ENCODE measurements at regions of chr15 and their contacts with region 1.

Region 1: GRCh38 chr15:90320061-90320884 is 31.8 kb upstream of the ZNF774 start:
- DNase-seq: peak; percentile 80
- ATAC-seq: peak; percentile 96
- H3K4me3 Mint-ChIP-seq: peak overlapping the region; percentile 68
- H3K27ac Mint-ChIP-seq: peak overlapping the region; percentile 95
- H3K4me1 Mint-ChIP-seq: peaks cover 13% of the 10 kb centered on the region
- H3K27me3 Mint-ChIP-seq: no peaks in the 10 kb centered on the region
- CTCF ChIP-seq: peak; percentile 89

Region 2: GRCh38 chr15:90233376-90234095 is 86.7 kb before region 1 on chr15 and contains the start of gene CIB1:
- CTCF ChIA-PET with region 1: interaction called, 13 read pairs
- POLR2A ChIA-PET with region 1: no interaction called
- DNase-seq: peak; percentile 95
- ATAC-seq: peak; percentile 90
- H3K4me3 Mint-ChIP-seq: peak within 1 kb of the TSS; percentile 72
- H3K27ac Mint-ChIP-seq: peak within 1 kb of the TSS; percentile 25
- H3K4me1 Mint-ChIP-seq: peaks cover 16% of the 10 kb centered on the region
- H3K27me3 Mint-ChIP-seq: no peaks in the 10 kb centered on the region
- CTCF ChIP-seq: no peak
- total RNA-seq, gene CIB1: 26.1 to 29.6 TPM (median 26.9 TPM) in 3 replicates

Region 3: DNA sequence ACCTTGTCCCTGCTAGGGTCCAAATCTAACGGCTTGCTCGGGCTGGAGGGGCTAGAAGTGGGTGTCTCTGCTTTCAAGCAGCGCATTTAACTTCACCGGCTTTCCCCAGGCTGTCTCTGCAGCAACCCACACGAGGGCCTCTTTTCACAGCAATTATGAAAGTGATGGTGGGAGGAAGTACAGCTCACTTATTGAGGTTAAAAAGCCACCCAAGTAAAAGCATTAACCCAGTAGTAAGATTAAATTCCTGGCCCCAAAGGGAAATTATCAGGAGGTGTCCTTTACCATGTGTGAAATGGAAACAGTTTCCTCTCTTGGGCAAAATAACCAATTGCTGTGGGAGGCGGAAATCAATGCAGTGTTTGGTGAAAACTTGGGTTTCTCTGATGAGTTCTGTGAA is 13.7 kb before region 1 on chr15:
- CTCF ChIA-PET with region 1: interaction called, 28 read pairs
- POLR2A ChIA-PET with region 1: no interaction called
- DNase-seq: no peak
- ATAC-seq: no peak
- H3K4me3 Mint-ChIP-seq: no peak overlapping the region
- H3K27ac Mint-ChIP-seq: no peak overlapping the region
- H3K4me1 Mint-ChIP-seq: peaks cover 6% of the 10 kb centered on the region
- H3K27me3 Mint-ChIP-seq: no peaks in the 10 kb centered on the region; the same call in 1 of the 2 replicates
- CTCF ChIP-seq: no peak

Region 4: DNA sequence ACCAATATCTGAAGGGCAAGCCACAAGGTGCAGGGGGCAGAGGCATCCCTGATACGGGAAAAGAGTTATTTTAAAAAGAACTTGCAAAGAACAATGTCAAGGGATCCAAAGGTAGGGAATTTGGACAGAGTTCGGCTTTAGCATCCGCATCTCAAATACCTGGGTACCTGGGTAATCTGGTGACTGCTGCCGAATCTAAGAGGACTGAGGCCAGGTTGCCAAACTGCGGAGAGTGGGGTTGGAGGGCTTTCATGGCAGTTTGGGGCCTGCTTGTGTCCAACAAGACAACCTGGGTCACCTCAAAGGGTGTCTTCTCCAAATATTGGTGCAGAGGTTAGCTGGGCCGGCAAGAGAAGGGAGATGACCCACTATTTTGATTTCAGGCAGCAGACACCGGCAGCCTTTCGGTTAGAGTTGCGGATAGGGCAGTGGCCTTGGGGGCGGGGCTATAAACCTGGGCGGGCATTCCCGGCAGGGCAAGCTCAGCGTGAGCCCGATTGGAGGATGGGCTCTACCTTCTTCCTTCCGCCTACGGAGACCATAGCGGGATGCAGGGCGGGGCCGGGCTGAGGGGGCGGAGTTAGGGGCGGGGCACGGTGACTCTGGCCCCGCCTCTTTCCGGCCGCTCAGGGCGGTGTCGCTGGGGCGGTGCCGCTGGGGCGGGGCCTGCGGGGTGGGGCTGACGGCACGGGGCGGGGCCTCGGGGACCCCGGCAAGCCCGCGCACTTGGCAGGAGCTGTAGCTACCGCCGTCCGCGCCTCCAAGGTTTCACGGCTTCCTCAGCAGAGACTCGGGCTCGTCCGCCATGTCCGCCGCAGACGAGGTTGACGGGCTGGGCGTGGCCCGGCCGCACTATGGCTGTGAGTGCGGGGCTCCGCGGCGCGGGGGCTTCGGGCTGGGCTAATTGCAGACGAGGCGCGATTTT is 67.5 kb after region 1 on chr15 and contains the start of gene IQGAP1:
- CTCF ChIA-PET with region 1: interaction called, 27 read pairs
- POLR2A ChIA-PET with region 1: no interaction called
- DNase-seq: peak; percentile 99
- ATAC-seq: peak; percentile 94
- H3K4me3 Mint-ChIP-seq: peak within 1 kb of the TSS; percentile 83
- H3K27ac Mint-ChIP-seq: peak within 1 kb of the TSS; percentile 89
- H3K4me1 Mint-ChIP-seq: peaks cover 39% of the 10 kb centered on the region
- H3K27me3 Mint-ChIP-seq: no peaks in the 10 kb centered on the region
- CTCF ChIP-seq: no peak
- total RNA-seq, gene IQGAP1: 83.0 to 106 TPM (median 86.8 TPM) in 3 replicates

Region 5: GRCh38 chr15:90465923-90466567 is 145.8 kb after region 1 on chr15:
- CTCF ChIA-PET with region 1: interaction called, 11 read pairs
- POLR2A ChIA-PET with region 1: no interaction called
- DNase-seq: no peak
- ATAC-seq: no peak
- H3K4me3 Mint-ChIP-seq: no peak overlapping the region
- H3K27ac Mint-ChIP-seq: no peak overlapping the region
- H3K4me1 Mint-ChIP-seq: 0 out of 2 replicates have a peak, but pooled peaks cover 4% of the 10 kb centered on the region
- H3K27me3 Mint-ChIP-seq: no peaks in the 10 kb centered on the region
- CTCF ChIP-seq: no peak

Region 6: GRCh38 chr15:90530250-90531051 is 210.2 kb after region 1 on chr15:
- CTCF ChIA-PET with region 1: interaction called, 14 read pairs
- POLR2A ChIA-PET with region 1: no interaction called
- DNase-seq: peak; percentile 38
- ATAC-seq: peak; percentile 54
- H3K4me3 Mint-ChIP-seq: peak overlapping the region; percentile 83
- H3K27ac Mint-ChIP-seq: no peak overlapping the region
- H3K4me1 Mint-ChIP-seq: peaks cover 5% of the 10 kb centered on the region
- H3K27me3 Mint-ChIP-seq: peaks cover 55% of the 10 kb centered on the region
- CTCF ChIP-seq: no peak

Region 7: GRCh38 chr15:90648137-90649070 is 328.1 kb after region 1 on chr15:
- CTCF ChIA-PET with region 1: interaction called, 14 read pairs
- POLR2A ChIA-PET with region 1: no interaction called
- DNase-seq: peak; percentile 59
- ATAC-seq: peak; percentile 83
- H3K4me3 Mint-ChIP-seq: no peak overlapping the region
- H3K27ac Mint-ChIP-seq: no peak overlapping the region
- H3K4me1 Mint-ChIP-seq: peaks cover 19% of the 10 kb centered on the region
- H3K27me3 Mint-ChIP-seq: no peaks in the 10 kb centered on the region
- CTCF ChIP-seq: peak; percentile 89

Measured in WTC11 (cell line).